Posterior vena cava (tissue), 2 donors: ENCODE measurements at regions of chr3 and their contacts with region 1.

Region 1: GRCh38 chr3:108494906-108495531 is 15.4 kb downstream of the MYH15 start:
- DNase-seq: no peak

Region 2: DNA sequence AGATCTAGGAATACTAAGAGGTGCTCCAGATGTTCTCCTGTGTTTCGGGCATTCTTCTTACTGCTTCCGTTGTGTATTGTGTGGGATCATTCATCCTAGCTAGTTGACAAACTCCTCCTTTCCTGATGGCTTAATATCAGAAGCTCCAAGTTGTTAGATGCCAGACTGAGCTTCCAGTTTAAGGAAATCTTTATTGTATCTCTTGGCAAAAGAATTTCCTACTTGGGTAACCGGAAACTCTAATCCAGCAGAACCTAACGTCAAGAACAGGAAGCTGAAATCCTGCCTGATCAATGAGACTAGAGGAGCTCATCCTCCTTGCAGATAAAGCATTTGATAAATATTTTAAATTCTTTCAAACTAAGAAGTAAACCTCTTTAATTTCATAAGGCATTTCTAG is 43.1 kb after region 1 on chr3:
- intact Hi-C with region 1: loop called in 1 of 2 experiments (anchors 5 kb)
- DNase-seq: no peak